ENCODE measurements at regions of chr17 and their contacts with region 1.

Region 1: DNA sequence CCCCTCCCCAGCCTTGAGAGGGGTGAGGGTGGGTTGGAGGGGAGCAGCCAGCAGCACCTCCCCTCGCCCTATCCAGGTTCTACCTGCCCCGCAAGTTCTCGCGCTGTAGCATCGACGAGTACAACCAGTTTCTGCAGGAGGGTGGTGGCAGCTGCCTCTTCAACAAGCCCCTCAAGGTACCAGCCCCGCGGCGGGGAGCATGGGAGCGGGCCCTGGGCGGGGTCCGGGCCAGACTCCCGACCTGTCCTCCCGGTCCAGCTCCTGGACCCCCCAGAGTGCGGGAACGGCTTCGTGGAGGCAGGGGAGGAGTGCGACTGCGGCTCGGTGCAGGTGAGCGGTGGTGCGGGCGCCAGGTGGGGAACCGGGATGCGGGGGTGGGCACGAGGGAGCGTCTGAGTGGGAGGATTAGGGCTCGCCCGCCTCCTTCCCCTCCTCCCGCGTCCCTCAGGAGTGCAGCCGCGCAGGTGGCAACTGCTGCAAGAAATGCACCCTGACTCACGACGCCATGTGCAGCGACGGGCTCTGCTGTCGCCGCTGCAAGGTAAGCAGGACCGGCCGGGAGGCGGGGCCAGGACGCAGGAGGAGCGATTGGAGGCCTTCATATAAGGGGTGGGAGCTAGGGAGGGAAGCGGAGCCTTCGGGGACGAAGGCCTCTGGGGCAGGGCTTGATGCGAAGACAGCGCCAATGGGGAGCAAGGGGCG is 16.5 kb downstream of the ADAM11 start:
- DNase-seq: peak; percentile 99

Region 2: DNA sequence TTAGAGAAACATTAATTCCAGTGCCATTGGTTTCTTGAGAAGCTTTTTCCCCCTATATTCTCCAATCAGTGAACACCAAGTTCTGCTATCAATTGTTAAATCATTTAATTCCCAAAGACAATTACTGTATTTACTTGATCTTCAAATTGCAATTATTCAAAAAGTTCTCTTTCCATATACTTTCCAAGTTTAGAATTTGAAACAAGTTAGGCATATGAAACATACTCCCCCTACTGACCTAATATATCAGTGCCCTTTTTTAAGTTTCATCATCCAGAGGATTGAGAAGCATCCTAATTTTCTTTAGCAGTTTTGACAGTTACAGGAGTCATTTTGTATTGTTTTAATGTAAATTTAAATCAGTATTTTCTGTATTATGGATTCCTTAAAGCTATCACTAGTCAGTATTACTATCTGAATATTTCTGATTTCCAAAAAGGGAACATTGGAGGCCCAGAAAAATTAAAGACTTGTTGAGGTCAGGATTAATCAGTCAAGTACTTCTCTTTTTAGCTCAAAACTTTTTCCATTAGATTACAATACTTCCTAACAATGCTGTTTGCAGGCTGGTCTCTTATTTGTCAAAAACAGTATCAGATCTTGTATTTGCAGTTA is 102.7 kb before region 1 on chr17:
- intact Hi-C with region 1: no loop called
- DNase-seq: no peak

Region 3: GRCh38 chr17:44829523-44830358 is 54.5 kb after region 1 on chr17 and contains the start of gene GJC1:
- intact Hi-C with region 1: loop called (anchors 2 kb)
- DNase-seq: peak; percentile 79
- total RNA-seq, gene GJC1: 32.0 TPM

Region 4: DNA sequence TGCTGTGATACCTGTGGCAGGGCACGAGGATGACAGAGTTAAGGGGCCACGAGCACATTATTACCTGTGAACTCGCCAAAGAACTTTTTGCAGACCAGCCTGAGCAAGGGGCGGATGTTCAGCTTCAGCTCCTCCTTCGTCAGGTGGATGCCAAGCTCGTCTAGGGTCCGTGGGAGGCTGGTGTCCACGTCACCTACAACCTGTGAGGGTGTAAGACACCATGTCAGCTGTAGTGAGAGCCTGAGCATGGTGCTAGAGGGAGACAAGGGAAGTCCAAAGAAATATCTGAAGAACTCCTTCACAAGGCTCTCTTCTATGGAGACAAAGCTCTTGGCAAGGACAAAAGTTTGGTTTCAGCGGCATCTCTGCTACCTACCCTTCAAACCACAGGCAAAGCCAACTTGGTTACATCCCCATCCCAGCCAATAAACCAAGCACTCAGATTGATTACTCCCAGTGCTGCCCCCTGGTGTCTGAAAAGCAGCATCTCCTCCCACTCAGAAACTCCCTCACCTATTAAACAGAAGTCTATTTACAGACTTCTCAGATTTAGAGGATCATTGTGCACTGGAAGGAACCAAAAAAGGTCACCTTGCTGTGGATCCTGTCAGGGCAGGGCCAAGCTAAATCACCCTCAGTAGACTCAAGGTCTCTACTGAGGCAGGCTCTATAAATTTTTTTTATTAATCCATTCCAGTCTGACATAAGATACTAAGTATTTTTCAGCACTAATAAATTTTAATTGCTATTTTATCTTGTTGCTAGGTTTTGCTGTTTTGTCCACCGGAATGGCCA is 89.8 kb after region 1 on chr17:
- intact Hi-C with region 1: loop called (anchors 1 kb)
- DNase-seq: peak; percentile 76

Region 5: GRCh38 chr17:45021607-45022287 is 246.5 kb after region 1 on chr17:
- intact Hi-C with region 1: loop called (anchors 5 kb)
- DNase-seq: peak; percentile 84

Region 6: DNA sequence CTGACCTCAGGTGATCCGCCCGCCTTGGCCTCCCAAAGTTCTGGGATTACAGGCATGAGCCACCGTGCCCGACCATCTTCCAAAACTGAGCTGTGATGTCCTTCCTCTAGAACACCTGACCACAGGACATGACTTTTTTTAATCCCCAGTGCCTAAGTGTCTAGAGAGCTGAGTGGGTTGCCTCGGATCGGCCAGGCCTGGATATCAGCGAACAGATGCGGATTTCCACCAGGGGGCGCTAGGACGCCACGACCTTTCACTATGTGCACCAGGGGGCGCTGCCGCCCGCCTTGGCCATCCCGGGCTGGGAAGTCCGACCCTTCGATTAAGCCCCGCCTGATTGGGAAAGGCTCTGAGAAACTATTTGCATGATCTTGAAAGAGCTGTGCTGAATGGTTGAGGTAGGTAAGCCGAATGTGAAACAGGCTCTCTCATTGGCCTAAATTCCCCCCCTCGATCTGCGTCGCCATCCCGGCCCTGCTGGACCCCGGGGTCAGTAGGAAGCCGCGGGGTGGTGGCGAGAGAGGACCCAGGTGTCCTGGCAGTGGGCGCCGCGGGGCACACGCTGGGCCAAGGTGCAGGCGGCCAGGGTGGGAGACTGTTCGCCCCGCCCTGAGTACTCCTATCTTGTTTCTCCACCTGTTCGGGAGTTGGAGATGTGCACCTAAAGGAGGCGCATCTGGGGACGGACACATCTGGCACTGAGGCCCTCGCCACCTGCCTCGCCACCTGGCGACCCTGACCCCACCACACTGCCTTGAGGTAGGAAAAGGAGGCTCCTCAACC is 360.1 kb after region 1 on chr17 and contains the start of gene ACBD4:
- intact Hi-C with region 1: loop called (anchors 5 kb)
- DNase-seq: peak; percentile 97
- total RNA-seq, gene ACBD4: 6.4 TPM